ENCODE measurements at regions of chr1 and their contacts with region 1.

Region 1: DNA sequence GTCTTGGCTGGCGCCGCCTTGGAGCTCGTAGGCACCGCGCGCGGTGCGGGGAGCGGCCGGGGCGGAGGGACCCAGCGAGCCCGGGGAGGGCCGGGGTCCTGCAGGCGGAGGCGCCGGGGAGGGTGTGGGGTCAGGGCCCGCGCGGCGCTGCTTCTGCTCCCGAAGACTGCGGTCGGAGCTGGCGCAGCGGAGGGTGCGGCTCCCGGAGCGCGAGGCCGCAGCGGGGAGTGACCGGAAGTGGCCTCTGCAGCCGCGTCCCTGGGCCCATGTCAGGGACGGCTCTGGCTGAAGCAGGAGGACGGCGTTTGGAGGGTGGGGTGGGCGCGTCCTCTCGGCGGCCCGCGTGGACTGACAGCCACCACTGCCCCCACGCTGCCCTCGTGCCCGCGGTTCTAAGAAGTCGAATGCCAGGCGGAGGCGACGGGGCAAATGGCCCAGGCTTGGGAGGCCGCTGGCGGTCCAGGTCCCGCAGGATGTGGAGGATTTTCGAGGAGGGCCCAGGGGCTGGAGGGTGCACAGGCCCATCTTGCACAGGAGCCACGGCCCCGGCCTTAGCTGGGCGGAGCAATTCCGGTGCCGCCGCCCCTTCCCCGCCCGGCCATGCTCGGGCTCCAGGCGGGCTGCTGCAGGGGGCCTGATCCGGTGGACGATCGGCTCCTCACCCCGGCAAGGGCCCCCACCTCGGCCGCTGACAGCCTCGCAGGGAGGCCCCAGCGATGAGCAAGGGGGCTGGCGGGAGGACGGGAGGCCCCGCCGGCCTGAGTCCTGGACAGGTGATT is 7.7 kb upstream of the ZNF669 start:
- DNase-seq: peak; percentile 79 to 87
- ATAC-seq: peak; percentile 90 to 98 (median 94)
- H3K4me3 ChIP-seq: peak overlapping the region; percentile 89
- H3K27ac ChIP-seq: peak overlapping the region; percentile 90
- H3K4me1 ChIP-seq: no peaks in the 10 kb centered on the region
- H3K27me3 ChIP-seq: no peaks in the 10 kb centered on the region
- CTCF ChIP-seq: no peak

Region 2: DNA sequence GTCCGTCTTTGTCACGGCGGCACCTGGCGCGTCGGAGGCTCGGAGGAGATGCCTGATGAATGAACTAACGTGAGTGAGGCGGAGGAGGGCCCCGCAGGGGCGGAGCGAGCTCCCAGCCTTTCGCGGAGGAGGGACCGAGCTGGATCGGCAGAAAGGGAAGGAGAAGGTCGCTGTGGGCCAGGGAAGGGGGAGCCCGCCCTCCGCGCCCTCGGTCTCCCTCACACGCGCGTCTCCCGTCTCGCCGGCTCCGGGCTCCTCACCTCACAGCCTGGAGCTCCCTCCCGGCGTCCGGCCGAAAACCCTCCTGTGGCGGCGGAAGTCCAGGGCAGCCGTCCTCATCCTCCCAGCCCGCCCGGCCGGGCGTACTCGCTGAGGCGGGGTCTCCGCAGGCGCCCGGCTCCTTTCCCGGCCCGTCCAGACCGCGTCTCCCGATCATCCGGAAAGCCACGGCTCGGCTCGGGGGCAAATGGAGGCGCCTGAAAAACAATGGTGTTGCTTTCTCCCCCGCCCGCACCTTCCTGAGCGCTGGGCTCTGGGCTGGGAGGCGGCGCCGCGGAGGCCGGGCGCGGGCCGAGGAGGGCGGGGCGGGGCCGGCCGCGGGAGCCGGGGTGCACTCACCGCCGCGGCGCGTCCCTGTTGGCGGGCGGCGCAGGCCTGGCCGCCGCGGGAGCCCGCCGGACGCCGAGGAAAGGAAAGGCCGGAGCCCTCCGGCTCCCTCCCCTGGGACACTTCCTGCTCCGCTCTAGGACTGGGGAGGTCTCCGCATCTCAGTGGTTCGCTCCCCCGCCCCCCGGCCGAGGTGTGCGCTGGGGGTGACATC is 219.5 kb after region 1 on chr1 and contains the start of gene ZNF496:
- intact Hi-C with region 1: loop called (anchors 10 kb)
- DNase-seq: peak; percentile 87 to 95
- ATAC-seq: peak; percentile 92 to 95 (median 94)
- H3K4me3 ChIP-seq: peak within 1 kb of the TSS; percentile 99
- H3K27ac ChIP-seq: peak within 1 kb of the TSS; percentile 95
- H3K4me1 ChIP-seq: peaks cover 40% of the 10 kb centered on the region
- H3K27me3 ChIP-seq: no peaks in the 10 kb centered on the region
- CTCF ChIP-seq: no peak
- total RNA-seq, gene ZNF496: 19.5 to 24.2 (median 22.9) TPM